PC-3 (cell line): ENCODE measurements at regions of chr9 and their contacts with region 1.

Region 1: DNA sequence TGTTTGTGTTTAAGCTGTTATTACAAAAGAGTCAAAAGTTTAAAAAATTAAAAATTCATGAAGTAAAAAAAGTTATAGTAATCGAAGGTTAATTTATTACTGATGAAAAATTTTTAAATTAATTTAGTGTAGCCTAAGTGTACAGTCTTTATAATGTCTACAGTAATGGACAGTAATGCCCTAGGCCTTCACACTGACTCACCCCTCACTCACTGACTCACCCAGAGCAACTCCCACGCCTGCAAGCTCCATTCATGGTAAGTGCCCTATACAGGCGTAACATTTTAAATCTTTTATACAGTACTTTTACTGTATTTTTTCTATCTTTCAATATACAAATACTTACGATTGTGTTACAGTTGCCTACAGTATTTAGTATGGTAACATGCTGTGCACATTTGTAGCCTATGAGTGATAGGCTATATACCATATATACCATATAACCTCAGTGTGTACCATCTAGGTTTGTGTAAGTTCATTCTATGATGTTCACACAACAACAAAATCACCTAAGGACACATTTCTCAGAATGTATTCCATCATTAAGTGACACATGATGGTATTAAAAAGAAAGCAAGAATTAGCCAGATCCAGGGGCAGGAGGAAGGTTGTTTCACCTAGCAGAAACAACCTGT is 40.1 kb downstream of the DCAF10 start:
- DNase-seq: peak; percentile 71
- ATAC-seq: peak; percentile 91
- H3K4me3 ChIP-seq: no peak overlapping the region
- H3K27ac ChIP-seq: peak overlapping the region; percentile 52
- H3K4me1 ChIP-seq: peaks cover 20% of the 10 kb centered on the region
- H3K27me3 ChIP-seq: no peaks in the 10 kb centered on the region
- CTCF ChIP-seq: no peak

Region 2: GRCh38 chr9:37776328-37776727 is 64.3 kb before region 1 on chr9:
- CTCF ChIA-PET with region 1: no interaction called
- POLR2A ChIA-PET with region 1: no interaction called
- intact Hi-C with region 1: loop called (anchors 5 kb)
- DNase-seq: peak; percentile 84
- ATAC-seq: peak; percentile 98
- H3K4me3 ChIP-seq: no peak overlapping the region
- H3K27ac ChIP-seq: peak overlapping the region; percentile 51
- H3K4me1 ChIP-seq: peaks cover 16% of the 10 kb centered on the region
- H3K27me3 ChIP-seq: no peaks in the 10 kb centered on the region
- CTCF ChIP-seq: no peak

Region 3: GRCh38 chr9:37806271-37806670 is 34.4 kb before region 1 on chr9:
- CTCF ChIA-PET with region 1: no interaction called
- POLR2A ChIA-PET with region 1: interaction called, 11 read pairs
- intact Hi-C with region 1: no loop called
- DNase-seq: no peak
- ATAC-seq: no peak
- H3K4me3 ChIP-seq: no peak overlapping the region
- H3K27ac ChIP-seq: no peak overlapping the region
- H3K4me1 ChIP-seq: no peaks in the 10 kb centered on the region
- H3K27me3 ChIP-seq: no peaks in the 10 kb centered on the region
- CTCF ChIP-seq: no peak